ENCODE measurements at regions of chr7 and their contacts with region 1.

Region 1: DNA sequence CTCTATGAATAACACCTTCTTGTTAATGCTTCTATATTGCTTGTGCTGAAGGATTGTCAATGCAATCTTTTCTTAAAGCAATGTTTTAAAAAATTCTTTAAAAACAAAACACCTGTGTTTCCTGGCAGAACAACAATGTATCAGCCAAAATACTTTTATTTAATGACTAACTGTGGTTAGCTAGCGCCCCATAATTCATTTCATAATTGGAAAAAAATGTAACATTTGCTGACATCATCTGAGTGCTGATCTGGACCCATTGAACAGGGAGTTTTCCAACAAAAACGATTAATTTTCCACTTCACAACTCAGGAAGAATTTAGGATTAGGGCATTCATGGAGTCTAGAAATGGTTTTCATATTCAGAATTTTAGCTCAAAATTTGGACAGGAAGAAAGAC is 137.6 kb upstream of the CDK6 start:
- DNase-seq: no peak
- H3K4me3 ChIP-seq: no peak overlapping the region
- H3K27ac ChIP-seq: no peak overlapping the region
- H3K4me1 ChIP-seq: no peaks in the 10 kb centered on the region
- H3K27me3 ChIP-seq: no peaks in the 10 kb centered on the region
- CTCF ChIP-seq: no peak
- EP300 ChIP-seq: no peak
- POLR2A ChIP-seq: no peak

Region 2: GRCh38 chr7:92880212-92881090 is 93.5 kb before region 1 on chr7:
- intact Hi-C with region 1: loop called (anchors 10 kb)
- DNase-seq: no peak
- H3K4me3 ChIP-seq: no peak overlapping the region
- H3K27ac ChIP-seq: no peak overlapping the region
- H3K4me1 ChIP-seq: no peaks in the 10 kb centered on the region
- H3K27me3 ChIP-seq: no peaks in the 10 kb centered on the region
- CTCF ChIP-seq: peak; percentile 24 to 41 (median 25)
- EP300 ChIP-seq: no peak
- POLR2A ChIP-seq: no peak